Sciatic nerve (tissue), 2 donors: ENCODE measurements at regions of chr13 and their contacts with region 1.

Region 1: GRCh38 chr13:82766732-82767321 is 1115.4 kb downstream of the SLITRK1 start:
- DNase-seq: no peak
- ATAC-seq: no peak

Region 2: GRCh38 chr13:82791035-82791434 is 24.2 kb after region 1 on chr13:
- intact Hi-C with region 1: loop called (anchors 1 kb)
- DNase-seq: no peak
- ATAC-seq: no peak

Region 3: GRCh38 chr13:83485101-83485500 is 718.3 kb after region 1 on chr13:
- intact Hi-C with region 1: no loop called
- DNase-seq: no peak
- ATAC-seq: no peak